Activated T-helper 1 cell treated with anti-CD3 and anti-CD28 coated beads, Interleukin-12 subunit alpha, Interleukin-12 subunit beta, Interleukin-2, Interleukin-4 antibody, amounts not matched to agents 30 ng/mL and 10 ng/mL and 1 ng/mL, durations not matched to agents 14 hours and 24 hours and 36 hours (primary cell): ENCODE measurements at regions of chr1 and their contacts with region 1.

Region 1: GRCh38 chr1:154760469-154760933 is 109.6 kb downstream of the KCNN3 start:
- DNase-seq: peak; percentile 76
- H3K4me3 Mint-ChIP-seq: peak overlapping the region; percentile 70
- H3K27ac Mint-ChIP-seq: peak overlapping the region; percentile 88
- H3K4me1 Mint-ChIP-seq: peaks cover 53% of the 10 kb centered on the region
- H3K27me3 Mint-ChIP-seq: peaks cover 14% of the 10 kb centered on the region

Region 2: GRCh38 chr1:154583773-154584172 is 176.7 kb before region 1 on chr1:
- intact Hi-C with region 1: no loop called
- DNase-seq: no peak
- H3K4me3 Mint-ChIP-seq: no peak overlapping the region
- H3K27ac Mint-ChIP-seq: no peak overlapping the region
- H3K4me1 Mint-ChIP-seq: peaks cover 3% of the 10 kb centered on the region
- H3K27me3 Mint-ChIP-seq: no peaks in the 10 kb centered on the region

Region 3: GRCh38 chr1:154669464-154670282 is 90.8 kb before region 1 on chr1:
- intact Hi-C with region 1: loop called (anchors 1 kb)
- DNase-seq: peak; percentile 64
- H3K4me3 Mint-ChIP-seq: no peak overlapping the region
- H3K27ac Mint-ChIP-seq: no peak overlapping the region
- H3K4me1 Mint-ChIP-seq: peaks cover 17% of the 10 kb centered on the region
- H3K27me3 Mint-ChIP-seq: peaks cover 2% of the 10 kb centered on the region

Region 4: DNA sequence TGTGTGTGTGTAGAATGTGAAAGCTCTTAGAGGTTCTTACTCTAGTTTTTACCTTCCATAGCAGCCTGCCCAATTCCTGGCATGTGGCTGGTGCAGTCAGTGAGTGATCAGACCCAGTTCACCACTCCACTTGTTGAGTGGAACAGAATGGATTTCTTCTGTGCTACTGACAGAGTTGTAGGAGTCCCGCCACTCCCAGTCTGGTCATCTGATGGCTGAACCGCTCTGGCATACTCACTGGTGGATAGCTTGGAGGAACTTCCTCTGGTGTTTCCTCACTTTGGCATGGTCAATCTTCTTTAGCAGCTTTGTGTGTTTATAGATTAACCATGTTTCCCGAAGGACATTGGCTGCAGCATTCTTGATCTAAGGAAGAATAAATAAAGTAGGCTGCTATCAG is 45.9 kb before region 1 on chr1:
- intact Hi-C with region 1: no loop called
- DNase-seq: no peak
- H3K4me3 Mint-ChIP-seq: no peak overlapping the region
- H3K27ac Mint-ChIP-seq: no peak overlapping the region
- H3K4me1 Mint-ChIP-seq: peaks cover 11% of the 10 kb centered on the region
- H3K27me3 Mint-ChIP-seq: peaks cover 8% of the 10 kb centered on the region

Region 5: DNA sequence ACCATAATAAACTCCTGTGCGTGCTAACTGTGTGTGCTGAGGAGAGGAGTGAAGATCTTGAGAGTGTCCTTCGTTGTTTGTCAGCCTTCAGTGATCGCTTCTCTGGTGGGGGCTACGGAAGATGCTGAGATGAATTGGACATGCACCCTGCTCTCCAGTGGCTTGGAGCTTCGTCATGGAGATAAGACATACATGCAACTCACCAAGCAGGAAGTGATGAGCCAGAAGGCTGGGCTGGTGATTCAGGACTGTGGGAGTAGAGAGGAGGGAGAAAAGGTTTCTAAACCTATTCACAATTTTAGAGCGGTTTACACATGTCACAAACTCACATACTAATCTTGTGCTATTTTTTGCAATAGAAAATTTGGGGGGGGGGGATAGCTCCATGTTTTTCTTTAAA is 23.7 kb before region 1 on chr1:
- intact Hi-C with region 1: loop called (anchors 1 kb)
- DNase-seq: no peak
- H3K4me3 Mint-ChIP-seq: peak overlapping the region; percentile 49
- H3K27ac Mint-ChIP-seq: peak overlapping the region; percentile 87
- H3K4me1 Mint-ChIP-seq: peaks cover 65% of the 10 kb centered on the region
- H3K27me3 Mint-ChIP-seq: peaks cover 2% of the 10 kb centered on the region

Region 6: GRCh38 chr1:154784924-154785531 is 24.5 kb after region 1 on chr1:
- intact Hi-C with region 1: loop called (anchors 1 kb)
- DNase-seq: peak; percentile 43
- H3K4me3 Mint-ChIP-seq: peak overlapping the region; percentile 23
- H3K27ac Mint-ChIP-seq: peak overlapping the region; percentile 81
- H3K4me1 Mint-ChIP-seq: peaks cover 45% of the 10 kb centered on the region
- H3K27me3 Mint-ChIP-seq: no peaks in the 10 kb centered on the region

Region 7: GRCh38 chr1:154791292-154792166 is 31.0 kb after region 1 on chr1:
- intact Hi-C with region 1: loop called (anchors 2 kb)
- DNase-seq: peak; percentile 78
- H3K4me3 Mint-ChIP-seq: peak overlapping the region; percentile 53
- H3K27ac Mint-ChIP-seq: peak overlapping the region; percentile 86
- H3K4me1 Mint-ChIP-seq: peaks cover 32% of the 10 kb centered on the region
- H3K27me3 Mint-ChIP-seq: peaks cover 4% of the 10 kb centered on the region

Region 8: GRCh38 chr1:154878371-154879022 is 118.0 kb after region 1 on chr1:
- intact Hi-C with region 1: loop called (anchors 5 kb)
- DNase-seq: peak; percentile 64
- H3K4me3 Mint-ChIP-seq: no peak overlapping the region
- H3K27ac Mint-ChIP-seq: no peak overlapping the region
- H3K4me1 Mint-ChIP-seq: peaks cover 18% of the 10 kb centered on the region
- H3K27me3 Mint-ChIP-seq: peaks cover 7% of the 10 kb centered on the region

Region 9: DNA sequence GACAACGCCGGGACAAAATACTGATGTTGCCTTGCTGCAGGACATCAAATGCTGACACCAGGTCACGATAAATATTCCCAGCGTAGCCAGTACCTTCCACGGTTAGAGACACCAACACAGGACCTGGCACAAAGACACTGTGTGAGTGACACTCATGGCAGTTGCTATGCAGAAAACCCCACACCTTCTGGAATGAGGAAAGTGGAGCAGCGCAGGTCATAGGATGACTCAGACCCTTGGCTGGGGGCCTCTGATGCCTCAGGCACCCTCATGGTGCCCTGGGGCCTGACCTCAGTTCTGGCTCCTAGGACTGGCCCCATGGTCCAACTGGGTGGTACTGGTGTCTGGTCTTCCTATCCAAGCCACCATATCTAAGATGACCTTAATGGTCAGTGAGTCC is 266.1 kb after region 1 on chr1:
- intact Hi-C with region 1: no loop called
- DNase-seq: no peak
- H3K4me3 Mint-ChIP-seq: no peak overlapping the region
- H3K27ac Mint-ChIP-seq: no peak overlapping the region
- H3K4me1 Mint-ChIP-seq: no peaks in the 10 kb centered on the region
- H3K27me3 Mint-ChIP-seq: peaks cover 7% of the 10 kb centered on the region

Region 10: GRCh38 chr1:155078469-155079209 is 318.1 kb after region 1 on chr1 and contains the start of gene EFNA3:
- intact Hi-C with region 1: loop called (anchors 2 kb)
- DNase-seq: peak; percentile 61
- H3K4me3 Mint-ChIP-seq: peak within 1 kb of the TSS; percentile 67
- H3K27ac Mint-ChIP-seq: peak within 1 kb of the TSS; percentile 0
- H3K4me1 Mint-ChIP-seq: peaks cover 37% of the 10 kb centered on the region
- H3K27me3 Mint-ChIP-seq: peaks cover 49% of the 10 kb centered on the region
- total RNA-seq, gene EFNA3: 2.8 and 3.0 TPM in 2 replicates